HAP-1 (cell line): ENCODE measurements at regions of chr1 and their contacts with region 1.

Region 1: GRCh38 chr1:26417111-26417759 is 6.6 kb downstream of the LIN28A start:
- DNase-seq: peak; percentile 80 to 93
- H3K4me3 ChIP-seq: no peak overlapping the region
- H3K4me1 ChIP-seq: peaks cover 41% of the 10 kb centered on the region
- H3K27me3 ChIP-seq: peaks cover 9% of the 10 kb centered on the region; the same call in 1 of the 2 replicates

Region 2: GRCh38 chr1:26177182-26177684 is 240.0 kb before region 1 on chr1 and contains the start of gene CNKSR1:
- in situ Hi-C with region 1: no loop called
- DNase-seq: no peak
- H3K4me3 ChIP-seq: no peak within 1 kb of the TSS
- H3K4me1 ChIP-seq: no peaks in the 10 kb centered on the region
- H3K27me3 ChIP-seq: no peaks in the 10 kb centered on the region

Region 3: GRCh38 chr1:26279456-26280332 is 137.5 kb before region 1 on chr1 and contains the start of gene SH3BGRL3:
- in situ Hi-C with region 1: loop called (anchors 10 kb)
- DNase-seq: peak; percentile 77 to 86
- H3K4me3 ChIP-seq: peak within 1 kb of the TSS; percentile 57
- H3K4me1 ChIP-seq: peaks cover 8% of the 10 kb centered on the region
- H3K27me3 ChIP-seq: no peaks in the 10 kb centered on the region

Region 4: DNA sequence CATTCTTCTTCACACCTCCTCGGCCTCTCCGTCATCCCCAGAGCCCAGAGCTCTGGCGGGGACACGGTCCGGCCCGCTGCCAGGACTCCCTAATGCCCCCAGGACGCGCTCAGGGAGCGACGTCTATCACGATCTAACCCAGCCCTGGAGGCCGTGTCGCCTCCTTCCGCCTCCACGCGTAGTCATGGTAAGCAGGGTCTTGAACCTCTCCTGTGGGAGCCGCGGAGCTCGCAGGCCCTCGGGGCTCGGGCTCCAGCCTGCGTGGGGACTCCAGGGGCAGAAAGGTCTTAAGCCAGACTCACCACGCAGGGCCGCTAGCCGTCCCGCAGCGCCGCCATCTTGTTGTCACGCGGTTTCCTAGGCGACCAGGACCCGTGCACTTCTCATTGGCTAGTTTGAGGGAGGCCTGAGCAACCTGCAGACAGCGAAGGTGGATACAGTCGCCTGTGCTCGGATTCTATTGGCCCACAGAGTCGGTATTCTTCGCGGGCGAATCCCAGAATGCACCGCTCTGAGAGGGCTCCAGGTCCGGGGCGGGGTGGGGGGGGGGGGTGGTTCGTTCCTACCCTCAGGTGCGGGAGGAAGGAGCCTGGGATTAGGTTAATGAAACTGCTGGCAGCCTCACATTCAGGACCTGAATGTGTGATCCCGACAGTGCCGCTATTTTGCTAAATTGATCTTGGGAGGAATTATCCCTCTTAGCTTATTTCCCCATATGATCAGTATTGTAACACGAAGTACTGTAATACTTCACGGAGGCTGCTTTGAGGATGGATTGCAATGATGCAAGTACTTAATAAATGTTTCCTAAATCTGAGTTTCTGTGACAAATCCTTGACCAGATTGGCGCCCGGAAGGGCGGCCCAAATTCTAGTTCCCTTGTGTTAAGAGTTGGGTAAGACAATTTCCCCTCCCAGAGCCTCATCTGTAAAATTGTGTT is 110.7 kb before region 1 on chr1 and contains the start of gene UBXN11:
- in situ Hi-C with region 1: no loop called
- DNase-seq: peak; percentile 97 to 98
- H3K4me3 ChIP-seq: peak within 1 kb of the TSS; percentile 82
- H3K4me1 ChIP-seq: peaks cover 8% of the 10 kb centered on the region
- H3K27me3 ChIP-seq: no peaks in the 10 kb centered on the region